HEK293 (cell line): ENCODE measurements at regions of chr15 and their contacts with region 1.

Region 1: DNA sequence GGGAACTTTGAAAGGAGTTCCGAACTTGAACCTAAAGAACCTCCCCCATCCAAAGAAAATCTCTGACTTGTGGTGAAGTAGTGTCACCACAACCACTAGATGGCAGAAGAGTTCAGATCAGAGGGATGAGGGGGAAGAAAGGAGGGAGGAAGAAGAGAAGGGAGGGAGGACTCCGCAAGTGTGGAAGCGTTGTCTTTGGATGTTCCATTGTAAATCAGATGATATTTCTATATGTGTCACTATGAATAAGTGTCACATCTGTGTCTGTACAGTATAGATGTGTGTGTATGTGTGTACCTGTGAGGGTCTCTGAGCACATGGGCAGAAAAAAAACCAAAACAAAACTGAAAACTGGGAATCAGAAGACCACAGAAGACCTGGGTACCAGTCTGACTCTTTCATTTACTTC is 16.9 kb downstream of the SLC24A1 start:
- H3K4me3 ChIP-seq: no peak overlapping the region
- H3K27ac ChIP-seq: no peak overlapping the region
- H3K4me1 ChIP-seq: peaks cover 2% of the 10 kb centered on the region; the same call in 1 of the 2 replicates
- CTCF ChIP-seq: peak; percentile 79

Region 2: DNA sequence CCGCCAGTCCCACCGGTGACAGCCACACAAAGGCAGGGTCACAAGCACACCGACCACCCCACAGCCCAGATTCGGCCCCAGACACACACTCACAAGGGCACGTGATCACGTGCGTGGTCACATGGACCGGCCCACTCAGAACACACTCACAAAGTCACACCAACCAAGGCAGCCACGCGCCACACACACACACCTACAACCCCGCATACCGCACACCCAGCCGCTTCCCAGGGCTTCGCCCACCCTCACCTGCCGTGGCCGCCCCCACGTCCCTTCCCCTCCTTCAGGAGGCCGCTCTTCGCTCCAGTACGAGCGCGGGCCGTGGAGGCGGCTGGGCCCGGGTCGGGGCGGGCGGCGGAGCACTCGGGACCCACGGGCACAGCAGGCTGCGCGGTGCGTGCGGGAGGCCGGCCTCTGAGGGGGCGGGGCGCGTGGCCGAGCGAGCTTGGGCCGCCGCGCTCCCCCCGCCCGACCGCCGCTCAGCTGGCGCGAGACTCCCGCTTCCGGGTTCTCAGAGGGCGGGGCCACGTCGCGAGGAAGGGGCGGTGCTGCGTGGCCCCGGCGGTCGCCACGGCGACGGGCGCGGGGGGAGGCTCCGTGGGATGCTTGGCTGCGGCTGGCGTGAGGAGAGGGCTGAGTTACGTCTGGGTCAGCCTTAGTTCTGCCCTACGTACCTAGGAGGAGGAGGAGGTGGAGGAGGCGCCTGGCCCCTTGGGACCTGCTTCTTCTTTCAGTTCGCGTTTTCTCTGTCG is 649.1 kb before region 1 on chr15 and contains the start of gene SPG21:
- CTCF ChIA-PET with region 1: no interaction called
- POLR2A ChIA-PET with region 1: no interaction called
- H3K4me3 ChIP-seq: peak within 1 kb of the TSS; percentile 95
- H3K27ac ChIP-seq: peak within 1 kb of the TSS; percentile 71; the same call in 1 of the 2 replicates
- H3K4me1 ChIP-seq: no peaks in the 10 kb centered on the region
- CTCF ChIP-seq: 0 out of 2 replicates have a peak, but pooled peaks have one; percentile 25

Region 3: DNA sequence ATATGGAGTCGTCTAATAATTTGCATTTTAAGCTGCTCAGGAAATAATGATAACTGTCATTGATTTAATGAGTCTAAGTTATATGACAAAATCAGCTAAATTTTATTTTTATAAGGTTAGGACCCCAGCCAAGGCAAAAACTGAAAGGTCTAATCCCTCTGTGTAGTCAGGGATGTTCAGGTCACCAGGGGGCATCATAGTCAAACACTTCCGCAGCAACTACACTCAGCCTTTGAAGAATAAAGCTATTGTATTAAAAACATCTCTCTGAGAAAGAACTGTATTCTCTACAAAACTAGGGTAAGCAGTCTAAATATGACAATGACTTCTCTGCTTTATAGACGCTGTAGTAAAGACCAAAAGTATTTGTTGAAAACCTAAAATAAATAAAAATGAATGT is 42.7 kb before region 1 on chr15:
- CTCF ChIA-PET with region 1: interaction called, 11 read pairs
- POLR2A ChIA-PET with region 1: no interaction called
- H3K4me3 ChIP-seq: no peak overlapping the region
- H3K27ac ChIP-seq: no peak overlapping the region
- H3K4me1 ChIP-seq: no peaks in the 10 kb centered on the region
- CTCF ChIP-seq: peak; percentile 10; the same call in 1 of the 2 replicates

Region 4: GRCh38 chr15:65650312-65651041 is 11.8 kb after region 1 on chr15:
- CTCF ChIA-PET with region 1: interaction called, 15 read pairs
- POLR2A ChIA-PET with region 1: no interaction called
- H3K4me3 ChIP-seq: no peak overlapping the region
- H3K27ac ChIP-seq: no peak overlapping the region
- H3K4me1 ChIP-seq: no peaks in the 10 kb centered on the region
- CTCF ChIP-seq: no peak

Region 5: DNA sequence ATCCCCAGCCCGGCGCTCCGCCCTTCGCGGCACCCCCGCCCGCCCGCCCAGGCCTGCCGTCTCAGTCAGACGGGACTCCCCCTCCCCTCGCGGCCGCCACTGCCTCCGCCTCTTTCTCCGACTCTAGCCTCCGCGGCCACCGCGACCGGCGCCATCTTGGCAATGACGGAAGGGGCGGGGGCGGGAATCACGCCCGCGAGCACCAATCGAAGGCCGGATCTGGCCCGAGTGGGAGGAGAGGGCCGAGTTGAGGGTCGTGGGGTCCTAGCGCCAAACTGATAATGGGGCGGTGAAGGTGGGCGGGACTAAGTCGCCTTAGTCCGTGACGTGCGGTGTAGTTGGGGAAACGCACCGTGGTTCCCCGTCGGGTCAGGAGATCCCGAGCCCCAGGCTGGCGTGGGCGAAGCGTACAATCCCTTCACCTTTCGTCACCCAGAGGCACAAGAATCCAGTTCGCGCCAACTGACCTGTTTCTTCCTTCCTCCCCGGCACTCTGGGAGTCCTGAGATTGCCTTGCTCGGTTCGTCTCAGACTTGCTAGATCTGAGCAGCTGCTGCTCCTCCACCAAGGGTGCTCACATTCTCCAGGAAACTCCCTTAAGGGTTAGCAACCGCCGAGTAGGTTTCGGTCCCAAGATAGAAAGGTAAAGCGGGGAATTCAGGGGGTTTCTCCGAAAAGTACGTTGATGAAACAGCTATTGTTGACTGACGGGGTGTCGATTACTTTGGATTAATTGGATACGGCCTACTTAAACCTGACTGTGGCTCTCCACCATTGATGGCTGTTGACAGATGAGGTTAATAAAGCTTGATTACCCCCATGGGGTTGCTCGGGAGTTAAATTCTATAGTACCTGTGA is 153.7 kb after region 1 on chr15 and contains the start of gene DENND4A:
- CTCF ChIA-PET with region 1: interaction called, 14 read pairs
- POLR2A ChIA-PET with region 1: no interaction called
- H3K4me3 ChIP-seq: peak within 1 kb of the TSS; percentile 70
- H3K27ac ChIP-seq: peak within 1 kb of the TSS; percentile 81
- H3K4me1 ChIP-seq: peaks cover 17% of the 10 kb centered on the region
- CTCF ChIP-seq: no peak

Region 6: GRCh38 chr15:65832549-65833364 is 194.1 kb after region 1 on chr15:
- CTCF ChIA-PET with region 1: interaction called, 57 read pairs
- POLR2A ChIA-PET with region 1: interaction called, 3 read pairs
- H3K4me3 ChIP-seq: no peak overlapping the region
- H3K27ac ChIP-seq: peak overlapping the region; percentile 79
- H3K4me1 ChIP-seq: peaks cover 15% of the 10 kb centered on the region
- CTCF ChIP-seq: 0 out of 2 replicates have a peak, but pooled peaks have one; percentile 31